ENCODE measurements at regions of chr17 and their contacts with region 1.

Region 1: GRCh38 chr17:15502369-15503112 is 35.1 kb upstream of the CDRT4 start:
- DNase-seq: peak; percentile 83
- H3K4me3 ChIP-seq: no peak overlapping the region
- H3K27ac ChIP-seq: peak overlapping the region; percentile 61
- H3K27me3 ChIP-seq: no peaks in the 10 kb centered on the region
- CTCF ChIP-seq: peak; percentile 92

Region 2: DNA sequence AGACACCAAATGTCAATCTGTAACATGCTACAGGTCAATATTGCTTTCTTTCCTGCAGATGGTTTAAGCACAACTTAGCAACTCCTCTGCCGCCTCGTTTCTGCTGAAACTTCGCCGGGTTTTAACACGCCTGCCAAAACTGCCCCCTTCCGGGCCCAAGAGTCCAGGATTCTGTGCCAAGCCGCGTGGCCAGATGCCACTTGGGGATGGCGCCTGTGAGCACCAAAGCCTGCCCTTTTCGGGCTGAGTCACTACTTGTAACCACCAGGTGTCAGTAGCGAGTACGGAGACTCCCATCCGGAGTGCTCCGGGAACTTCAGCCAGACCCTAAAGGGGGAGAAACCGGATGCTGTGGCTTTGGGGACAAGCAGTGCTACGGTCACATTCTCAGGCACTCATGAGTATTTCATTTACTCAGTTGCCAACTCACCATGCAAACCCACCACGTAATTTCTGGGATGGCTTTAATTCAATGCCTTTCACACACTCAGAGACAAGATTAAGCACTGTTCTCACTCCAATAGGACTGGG is 245.2 kb before region 1 on chr17:
- CTCF ChIA-PET with region 1: interaction called, 116 read pairs
- POLR2A ChIA-PET with region 1: interaction called, 13 read pairs
- DNase-seq: peak; percentile 38
- H3K4me3 ChIP-seq: peak overlapping the region; percentile 36
- H3K27ac ChIP-seq: no peak overlapping the region
- H3K27me3 ChIP-seq: no peaks in the 10 kb centered on the region
- CTCF ChIP-seq: peak; percentile 90

Region 3: DNA sequence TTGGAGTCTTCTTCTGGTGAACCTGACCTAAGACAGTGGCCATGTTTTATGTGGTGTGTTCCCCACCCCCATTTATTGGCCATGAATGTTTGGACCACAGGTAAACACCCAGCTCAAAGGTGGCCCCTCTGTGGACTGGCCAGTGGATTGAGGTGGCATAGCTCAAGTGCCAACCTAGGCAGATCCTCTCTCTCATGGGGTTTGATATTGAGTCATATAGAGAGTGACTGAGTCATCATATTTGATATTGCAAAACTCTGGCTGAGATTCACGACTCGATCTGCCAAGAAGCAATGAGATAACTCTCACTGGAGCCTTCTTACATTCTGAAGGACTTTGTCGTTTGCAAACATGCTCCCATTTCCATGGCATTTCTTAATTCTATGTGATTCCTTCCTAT is 150.6 kb before region 1 on chr17:
- CTCF ChIA-PET with region 1: interaction called, 10 read pairs
- POLR2A ChIA-PET with region 1: no interaction called
- DNase-seq: peak; percentile 39
- H3K4me3 ChIP-seq: no peak overlapping the region
- H3K27ac ChIP-seq: no peak overlapping the region
- H3K27me3 ChIP-seq: no peaks in the 10 kb centered on the region
- CTCF ChIP-seq: no peak

Region 4: DNA sequence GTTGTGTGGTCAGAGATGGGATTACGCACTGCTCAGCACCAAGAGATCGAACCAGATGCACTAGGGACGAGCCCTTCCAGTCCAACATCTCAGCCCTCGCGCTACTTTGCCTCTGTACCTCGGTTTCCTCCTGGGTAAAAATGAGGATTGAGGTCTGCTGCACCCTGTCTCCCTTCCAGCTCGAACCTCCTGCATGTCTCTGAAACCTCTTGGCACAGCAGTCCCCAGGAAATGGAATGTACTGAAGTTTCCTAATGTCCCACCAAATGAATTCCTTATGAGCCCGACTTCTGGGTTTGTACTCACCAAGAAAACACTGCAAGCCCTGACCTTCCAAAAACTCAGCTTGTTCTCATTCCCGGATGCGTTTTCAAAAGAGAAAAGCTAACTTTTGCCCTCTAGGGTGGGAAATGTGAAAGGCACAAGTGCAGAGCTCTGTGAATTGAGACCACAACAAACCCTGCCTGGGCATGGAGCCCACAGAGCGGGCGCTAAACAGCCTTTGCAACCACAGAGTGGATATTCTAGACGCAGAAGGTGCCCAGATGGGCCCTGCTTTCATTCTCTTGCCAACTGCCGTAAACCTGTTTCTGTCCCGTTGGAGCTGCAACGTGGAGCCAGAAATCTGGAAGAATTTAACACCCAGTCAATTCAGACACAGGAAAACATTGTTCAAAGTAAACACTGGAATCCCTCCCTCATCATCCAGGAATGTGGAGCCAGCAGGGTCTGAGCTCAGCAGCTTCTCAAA is 45.4 kb before region 1 on chr17:
- CTCF ChIA-PET with region 1: interaction called, 11 read pairs
- POLR2A ChIA-PET with region 1: interaction called, 6 read pairs
- DNase-seq: peak; percentile 80
- H3K4me3 ChIP-seq: no peak overlapping the region; the same call in 1 of the 2 replicates
- H3K27ac ChIP-seq: peak overlapping the region; percentile 80
- H3K27me3 ChIP-seq: no peaks in the 10 kb centered on the region
- CTCF ChIP-seq: peak; percentile 70

Region 5: DNA sequence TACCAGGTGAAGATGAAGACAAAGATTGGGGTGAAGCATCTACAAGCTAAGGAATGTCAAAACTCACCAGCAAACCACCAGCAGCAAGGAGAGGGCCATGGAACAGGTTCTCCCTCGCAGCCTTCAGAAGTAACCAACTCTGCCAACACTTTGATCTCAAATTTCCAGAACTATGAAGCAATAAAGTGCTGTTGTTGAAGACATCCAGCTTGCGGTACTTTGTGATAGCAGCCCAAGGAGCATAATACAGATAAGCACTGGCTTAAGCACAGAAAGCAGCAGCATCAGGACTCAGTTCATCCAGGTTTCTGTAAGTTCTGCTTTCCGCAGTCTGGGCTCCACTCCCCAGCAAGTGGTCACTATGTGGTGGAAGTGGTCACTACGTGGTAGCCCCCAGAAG is 19.1 kb before region 1 on chr17:
- CTCF ChIA-PET with region 1: interaction called, 28 read pairs
- POLR2A ChIA-PET with region 1: no interaction called
- DNase-seq: no peak
- H3K4me3 ChIP-seq: no peak overlapping the region
- H3K27ac ChIP-seq: no peak overlapping the region
- H3K27me3 ChIP-seq: no peaks in the 10 kb centered on the region
- CTCF ChIP-seq: no peak

Measured in AG04450 (cell line).